ENCODE measurements at regions of chr7 and their contacts with region 1.

Region 1: DNA sequence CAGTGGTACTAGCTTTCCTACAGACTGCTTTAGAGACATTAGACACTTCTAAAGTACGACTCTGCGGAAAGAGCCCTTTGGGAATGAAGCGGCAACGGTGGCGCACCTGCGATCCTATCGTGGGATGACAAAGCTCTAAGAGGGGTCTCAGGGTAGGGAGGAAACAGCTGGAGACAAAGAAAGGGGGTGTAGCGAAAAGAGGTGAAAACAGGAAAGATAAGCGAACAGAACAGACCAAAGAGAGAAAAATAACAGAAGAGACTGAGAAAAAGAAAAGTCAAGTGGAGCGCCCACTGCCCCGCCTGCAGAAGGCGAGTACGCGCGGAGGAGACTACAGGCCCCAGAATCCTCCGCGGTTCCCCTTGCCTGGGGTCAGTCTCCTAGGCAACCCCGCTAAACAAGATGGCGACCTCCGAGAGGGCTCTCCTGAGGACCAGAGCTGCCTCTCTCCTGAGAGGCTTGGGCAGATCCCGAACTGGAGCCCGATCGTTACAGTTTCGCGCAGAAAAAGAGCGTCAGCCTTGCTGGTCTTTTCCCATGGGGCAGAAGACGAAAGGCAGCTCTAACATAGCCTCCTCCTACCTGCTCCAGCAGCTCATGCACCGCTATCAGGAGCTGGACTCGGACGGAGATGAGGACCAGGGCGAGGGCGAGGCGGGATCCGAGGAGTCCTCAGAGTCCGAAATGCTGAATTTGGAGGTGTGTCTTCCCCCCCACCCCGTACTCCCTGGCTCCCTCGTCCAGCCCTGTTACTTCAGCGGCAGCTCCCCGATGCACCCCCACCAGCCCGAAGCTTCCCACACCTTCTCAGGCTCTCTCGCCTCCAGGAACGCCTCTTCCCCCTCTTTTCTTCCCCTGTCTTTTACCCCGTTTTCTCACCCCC is at the start of gene LRGUK:
- DNase-seq: peak; percentile 77 to 90
- ATAC-seq: peak; percentile 99 to 100 (median 99)
- H3K4me3 ChIP-seq: peak within 1 kb of the TSS; percentile 39 to 93 (median 68)
- H3K27ac ChIP-seq: no peak within 1 kb of the TSS
- H3K4me1 ChIP-seq: peaks cover 0 to 22% (median 0%) of the 10 kb centered on the region in 9 donors
- H3K27me3 ChIP-seq: peaks cover 0 to 10% (median 0%) of the 10 kb centered on the region in 7 donors
- CTCF ChIP-seq: no peak
- total RNA-seq, gene LRGUK: 0.15 to 0.47 (median 0.21) TPM in 6 of 10 donors, not detected in the others

Region 2: GRCh38 chr7:134044682-134045081 is 82.5 kb before region 1 on chr7:
- intact Hi-C with region 1: loop called in 1 of 10 experiments (anchors 10 kb)
- DNase-seq: no peak
- ATAC-seq: no peak
- H3K4me3 ChIP-seq: no peak overlapping the region
- H3K27ac ChIP-seq: no peak overlapping the region
- H3K4me1 ChIP-seq: no peaks in the 10 kb centered on the region
- H3K27me3 ChIP-seq: no peaks in the 10 kb centered on the region
- CTCF ChIP-seq: no peak

Region 3: DNA sequence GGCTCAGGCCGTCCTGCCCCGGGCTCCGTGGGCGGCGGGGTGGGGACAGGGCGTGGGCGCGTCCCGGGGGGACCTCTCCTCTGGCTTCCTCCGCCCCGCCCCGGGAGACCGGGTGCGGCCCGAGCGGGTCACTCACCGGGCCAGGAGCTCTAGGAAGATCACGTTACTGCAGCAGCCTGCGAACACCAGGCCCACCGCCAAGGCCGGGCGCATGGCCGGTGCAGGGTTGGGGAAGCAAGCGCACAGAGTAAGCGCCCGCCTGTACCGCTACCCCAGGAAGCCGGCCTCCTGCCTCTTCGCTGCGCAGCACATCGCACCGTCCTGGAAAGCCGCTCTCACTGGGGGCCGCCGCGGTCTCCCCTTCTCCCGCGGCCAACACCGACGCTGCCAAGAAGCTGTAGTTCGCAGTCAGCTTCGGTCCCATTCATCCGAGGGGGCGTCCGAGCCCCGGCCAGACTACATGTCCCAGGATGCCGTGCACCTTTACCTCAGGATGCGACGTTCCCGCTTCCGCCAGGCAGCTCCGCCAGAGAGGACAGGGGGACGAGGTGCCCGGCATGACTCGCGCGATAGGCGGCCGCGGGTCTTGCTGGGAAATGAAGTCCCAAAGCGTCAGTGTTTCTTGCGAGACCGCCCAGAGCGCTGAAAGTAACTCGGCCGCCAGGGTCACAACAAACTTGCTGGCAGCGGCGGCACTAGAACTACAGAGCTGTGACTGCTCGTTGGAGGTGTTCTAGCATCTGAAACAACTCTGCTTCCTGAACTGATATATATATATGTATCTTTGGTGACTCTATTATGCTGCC is 189.5 kb after region 1 on chr7 and contains the start of gene SLC35B4:
- intact Hi-C with region 1: loop called in 2 of 10 experiments (anchors 5 to 10 kb)
- DNase-seq: peak; percentile 96 to 97
- ATAC-seq: peak; percentile 100
- H3K4me3 ChIP-seq: peak within 1 kb of the TSS; percentile 56 to 96 (median 86)
- H3K27ac ChIP-seq: peak within 1 kb of the TSS; percentile 13 to 89 (median 82)
- H3K4me1 ChIP-seq: peaks cover 0 to 15% (median 10%) of the 10 kb centered on the region in 9 donors
- H3K27me3 ChIP-seq: no peaks in the 10 kb centered on the region
- CTCF ChIP-seq: peak in 6 of 9 donors; percentile 6 to 46 (median 38)
- total RNA-seq, gene SLC35B4: 2.4 to 7.9 (median 5.0) TPM

Region 4: DNA sequence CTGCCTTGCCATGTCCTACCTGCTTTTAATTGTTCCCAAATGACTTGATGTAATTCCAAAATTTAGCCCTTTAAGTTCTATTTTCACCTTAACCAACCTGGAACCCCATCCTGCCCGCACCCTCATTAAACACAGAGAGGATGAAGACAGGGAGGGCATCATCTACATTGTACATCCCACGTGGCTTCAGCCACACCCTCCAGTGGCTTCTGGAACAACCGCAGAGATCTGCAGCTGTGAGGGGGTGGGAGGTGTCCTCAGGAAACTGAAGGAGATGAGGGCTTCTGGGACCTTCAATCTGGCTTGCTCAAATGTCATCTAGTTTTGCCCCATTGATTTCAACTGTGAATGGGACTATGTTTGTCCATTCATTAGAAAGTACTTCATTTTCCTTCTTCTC is 292.7 kb after region 1 on chr7:
- intact Hi-C with region 1: loop called in 1 of 10 experiments (anchors 10 kb)
- DNase-seq: no peak
- ATAC-seq: peak in 1 of 8 donors; percentile 21
- H3K4me3 ChIP-seq: no peak overlapping the region
- H3K27ac ChIP-seq: no peak overlapping the region
- H3K4me1 ChIP-seq: peaks cover 0 to 4% (median 0%) of the 10 kb centered on the region in 9 donors
- H3K27me3 ChIP-seq: peaks cover 0 to 11% (median 0%) of the 10 kb centered on the region in 7 donors
- CTCF ChIP-seq: no peak

Measured in heart right ventricle (tissue), 16 donors.